PC-3 (cell line): ENCODE measurements at regions of chr22 and their contacts with region 1.

Region 1: GRCh38 chr22:28829358-28830181 is 29.2 kb upstream of the XBP1 start:
- DNase-seq: peak; percentile 80
- ATAC-seq: peak; percentile 51; the same call in 1 of the 2 replicates
- H3K4me3 ChIP-seq: no peak overlapping the region
- H3K27ac ChIP-seq: no peak overlapping the region
- H3K4me1 ChIP-seq: no peaks in the 10 kb centered on the region
- H3K27me3 ChIP-seq: no peaks in the 10 kb centered on the region
- CTCF ChIP-seq: peak; percentile 90

Region 2: GRCh38 chr22:28791841-28792490 is 37.6 kb before region 1 on chr22:
- CTCF ChIA-PET with region 1: no interaction called
- POLR2A ChIA-PET with region 1: no interaction called
- intact Hi-C with region 1: loop called (anchors 2 kb)
- DNase-seq: no peak
- ATAC-seq: peak; percentile 15; the same call in 1 of the 2 replicates
- H3K4me3 ChIP-seq: no peak overlapping the region
- H3K27ac ChIP-seq: no peak overlapping the region
- H3K4me1 ChIP-seq: no peaks in the 10 kb centered on the region
- H3K27me3 ChIP-seq: no peaks in the 10 kb centered on the region
- CTCF ChIP-seq: no peak